ENCODE measurements at regions of chr5 and their contacts with region 1.

Region 1: GRCh38 chr5:88729084-88729828 is 153.7 kb downstream of the MEF2C start:
- DNase-seq: no peak
- ATAC-seq: peak; percentile 21
- H3K4me3 Mint-ChIP-seq: no peak overlapping the region
- H3K27ac Mint-ChIP-seq: peak overlapping the region; percentile 78
- H3K4me1 Mint-ChIP-seq: peaks cover 51% of the 10 kb centered on the region
- H3K27me3 Mint-ChIP-seq: no peaks in the 10 kb centered on the region
- CTCF ChIP-seq: peak; percentile 58

Region 2: DNA sequence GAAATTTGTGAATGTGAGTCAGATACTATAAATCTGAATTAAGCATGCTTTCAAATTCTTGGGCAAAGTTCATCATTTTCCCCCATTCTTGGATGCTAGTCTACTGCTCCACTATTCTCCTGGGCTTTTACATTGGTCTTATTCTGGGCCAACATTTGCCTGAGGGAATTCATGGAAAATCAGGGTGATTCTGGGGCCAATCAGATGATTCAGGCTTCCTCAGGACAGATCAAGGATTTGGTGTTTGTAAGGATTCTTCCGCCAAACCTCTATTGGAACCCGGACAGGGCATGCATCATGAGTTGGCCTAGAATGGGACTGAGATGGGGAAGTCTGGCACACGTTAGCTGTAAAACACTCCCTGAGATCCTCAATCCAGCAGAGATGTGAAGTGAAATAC is 39.9 kb after region 1 on chr5:
- CTCF ChIA-PET with region 1: interaction called, 3 read pairs
- POLR2A ChIA-PET with region 1: interaction called, 5 read pairs
- intact Hi-C with region 1: loop called (anchors 5 kb)
- DNase-seq: no peak
- ATAC-seq: no peak
- H3K4me3 Mint-ChIP-seq: no peak overlapping the region
- H3K27ac Mint-ChIP-seq: no peak overlapping the region
- H3K4me1 Mint-ChIP-seq: peaks cover 68% of the 10 kb centered on the region
- H3K27me3 Mint-ChIP-seq: no peaks in the 10 kb centered on the region
- CTCF ChIP-seq: no peak

Region 3: GRCh38 chr5:88845081-88845697 is 115.9 kb after region 1 on chr5:
- CTCF ChIA-PET with region 1: interaction called, 4 read pairs
- POLR2A ChIA-PET with region 1: interaction called, 22 read pairs
- intact Hi-C with region 1: loop called (anchors 1 kb)
- DNase-seq: no peak
- ATAC-seq: peak; percentile 79
- H3K4me3 Mint-ChIP-seq: peak overlapping the region; percentile 71
- H3K27ac Mint-ChIP-seq: peak overlapping the region; percentile 89
- H3K4me1 Mint-ChIP-seq: peaks cover 75% of the 10 kb centered on the region
- H3K27me3 Mint-ChIP-seq: no peaks in the 10 kb centered on the region
- CTCF ChIP-seq: no peak

Region 4: GRCh38 chr5:88984040-88984439 is 254.8 kb after region 1 on chr5:
- CTCF ChIA-PET with region 1: no interaction called
- POLR2A ChIA-PET with region 1: no interaction called
- intact Hi-C with region 1: no loop called
- DNase-seq: no peak
- ATAC-seq: no peak
- H3K4me3 Mint-ChIP-seq: no peak overlapping the region
- H3K27ac Mint-ChIP-seq: no peak overlapping the region
- H3K4me1 Mint-ChIP-seq: peaks cover 20% of the 10 kb centered on the region
- H3K27me3 Mint-ChIP-seq: no peaks in the 10 kb centered on the region
- CTCF ChIP-seq: no peak

Region 5: GRCh38 chr5:89117124-89117644 is 387.9 kb after region 1 on chr5:
- CTCF ChIA-PET with region 1: no interaction called
- POLR2A ChIA-PET with region 1: no interaction called
- intact Hi-C with region 1: no loop called
- DNase-seq: no peak
- ATAC-seq: peak; percentile 45
- H3K4me3 Mint-ChIP-seq: no peak overlapping the region
- H3K27ac Mint-ChIP-seq: no peak overlapping the region
- H3K4me1 Mint-ChIP-seq: peaks cover 8% of the 10 kb centered on the region
- H3K27me3 Mint-ChIP-seq: no peaks in the 10 kb centered on the region
- CTCF ChIP-seq: no peak

Region 6: GRCh38 chr5:89255845-89256463 is 526.7 kb after region 1 on chr5:
- CTCF ChIA-PET with region 1: interaction called, 3 read pairs
- POLR2A ChIA-PET with region 1: no interaction called
- intact Hi-C with region 1: loop called (anchors 5 kb)
- DNase-seq: no peak
- ATAC-seq: peak; percentile 58
- H3K4me3 Mint-ChIP-seq: no peak overlapping the region
- H3K27ac Mint-ChIP-seq: no peak overlapping the region
- H3K4me1 Mint-ChIP-seq: peaks cover 31% of the 10 kb centered on the region
- H3K27me3 Mint-ChIP-seq: no peaks in the 10 kb centered on the region
- CTCF ChIP-seq: no peak

Region 7: DNA sequence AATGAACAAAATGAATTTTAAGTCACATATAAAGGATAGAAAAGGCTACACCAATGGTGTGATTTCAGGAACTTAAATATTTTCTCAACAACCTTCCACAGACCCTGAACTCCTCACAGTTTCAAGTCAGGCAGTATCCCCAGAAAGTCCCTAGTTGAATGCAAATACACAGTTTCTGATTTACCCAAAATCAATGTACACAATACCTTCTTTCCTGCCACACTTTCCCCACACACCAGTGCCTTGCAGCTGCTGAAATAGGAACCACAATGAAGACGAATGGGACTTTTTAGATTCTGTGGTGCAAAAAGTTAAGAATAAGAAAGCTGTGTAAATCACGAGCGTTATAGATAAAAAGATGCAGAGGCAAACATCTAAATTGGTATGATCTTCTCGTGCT is 706.1 kb after region 1 on chr5:
- CTCF ChIA-PET with region 1: no interaction called
- POLR2A ChIA-PET with region 1: interaction called, 10 read pairs
- intact Hi-C with region 1: no loop called
- DNase-seq: no peak
- ATAC-seq: peak; percentile 85
- H3K4me3 Mint-ChIP-seq: peak overlapping the region; percentile 52
- H3K27ac Mint-ChIP-seq: peak overlapping the region; percentile 86
- H3K4me1 Mint-ChIP-seq: peaks cover 73% of the 10 kb centered on the region
- H3K27me3 Mint-ChIP-seq: no peaks in the 10 kb centered on the region
- CTCF ChIP-seq: no peak

Region 8: DNA sequence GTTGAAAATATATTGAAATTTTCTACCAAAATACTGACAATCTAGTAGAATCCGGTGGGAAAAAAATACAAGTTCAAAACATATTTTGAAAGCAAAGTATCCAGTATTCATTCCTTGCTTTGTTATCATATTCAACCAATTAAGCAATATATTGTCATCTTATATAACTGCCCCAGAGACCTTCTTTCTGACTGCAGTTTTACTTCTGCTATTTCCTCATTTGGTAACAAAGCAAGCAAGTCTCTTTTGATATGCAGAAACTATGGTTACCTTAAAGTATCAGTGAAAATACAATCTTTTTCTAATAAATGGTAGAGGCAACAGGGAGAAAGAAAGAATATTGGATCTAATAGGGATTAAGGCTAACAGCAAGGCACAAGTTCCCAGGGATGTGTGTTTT is 817.4 kb after region 1 on chr5:
- CTCF ChIA-PET with region 1: no interaction called
- POLR2A ChIA-PET with region 1: no interaction called
- intact Hi-C with region 1: no loop called
- DNase-seq: no peak
- ATAC-seq: peak; percentile 57
- H3K4me3 Mint-ChIP-seq: no peak overlapping the region
- H3K27ac Mint-ChIP-seq: no peak overlapping the region
- H3K4me1 Mint-ChIP-seq: peaks cover 11% of the 10 kb centered on the region
- H3K27me3 Mint-ChIP-seq: no peaks in the 10 kb centered on the region
- CTCF ChIP-seq: no peak

Region 9: GRCh38 chr5:90161414-90161813 is 1432.2 kb after region 1 on chr5:
- CTCF ChIA-PET with region 1: interaction called, 10 read pairs
- POLR2A ChIA-PET with region 1: no interaction called
- intact Hi-C with region 1: loop called (anchors 1 kb)
- DNase-seq: no peak
- ATAC-seq: peak; percentile 50
- H3K4me3 Mint-ChIP-seq: no peak overlapping the region
- H3K27ac Mint-ChIP-seq: no peak overlapping the region
- H3K4me1 Mint-ChIP-seq: no peaks in the 10 kb centered on the region
- H3K27me3 Mint-ChIP-seq: no peaks in the 10 kb centered on the region
- CTCF ChIP-seq: no peak

Region 10: DNA sequence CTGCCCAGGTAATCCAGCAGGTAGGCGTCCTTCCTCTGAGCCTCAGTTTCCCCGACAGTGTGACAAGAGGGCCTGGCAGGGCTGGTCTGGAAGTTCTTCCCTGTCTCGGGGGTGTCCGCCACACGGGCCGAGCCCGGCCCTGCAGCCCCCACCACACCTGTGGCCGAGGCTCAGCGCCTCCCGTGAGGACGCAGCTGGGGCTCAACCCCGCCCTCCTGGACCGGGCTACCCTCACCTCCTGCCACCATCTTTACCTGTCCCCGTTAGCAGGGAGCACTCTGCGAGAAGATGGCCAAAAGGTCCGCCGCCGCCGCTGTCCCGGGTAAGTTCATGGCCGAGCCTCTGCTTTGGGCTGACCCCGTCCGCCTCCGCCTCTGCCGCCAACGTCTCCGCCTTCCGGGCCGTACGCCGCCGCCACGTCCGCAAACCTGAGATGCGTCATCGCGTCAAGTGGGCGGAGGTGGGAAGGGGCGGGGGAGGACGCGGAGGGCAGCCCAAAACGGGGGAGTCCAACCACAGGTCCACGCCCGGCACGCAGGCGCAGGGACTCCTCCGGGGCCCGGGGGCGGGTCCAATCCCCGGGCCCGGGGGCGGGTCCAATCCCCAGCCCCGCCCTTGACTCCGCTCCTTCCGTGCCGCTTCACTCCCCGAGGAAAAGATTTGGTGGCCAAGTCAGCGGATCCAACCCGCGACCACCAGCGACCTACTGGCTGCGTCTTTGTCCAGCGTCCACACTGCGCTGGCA is 1800.1 kb after region 1 on chr5 and contains the start of gene LYSMD3:
- CTCF ChIA-PET with region 1: no interaction called
- POLR2A ChIA-PET with region 1: no interaction called
- intact Hi-C with region 1: loop called (anchors 1 kb)
- DNase-seq: peak; percentile 95
- ATAC-seq: peak; percentile 93
- H3K4me3 Mint-ChIP-seq: peak within 1 kb of the TSS; percentile 100
- H3K27ac Mint-ChIP-seq: peak within 1 kb of the TSS; percentile 97
- H3K4me1 Mint-ChIP-seq: peaks cover 33% of the 10 kb centered on the region
- H3K27me3 Mint-ChIP-seq: peaks cover 20% of the 10 kb centered on the region
- CTCF ChIP-seq: no peak
- total RNA-seq, gene LYSMD3: 18.3 and 18.4 TPM in 2 replicates